ENCODE measurements at regions of chr10 and their contacts with region 1.

Region 1: GRCh38 chr10:71888623-71889387 is 37.8 kb upstream of the PSAP start:
- DNase-seq: peak; percentile 99 to 100 (median 100)
- H3K4me3 ChIP-seq: peak overlapping the region; percentile 8 to 64 (median 11)
- H3K4me3 Mint-ChIP-seq: peak overlapping the region; percentile 73 to 80
- H3K27ac ChIP-seq: peak overlapping the region; percentile 93 to 100
- H3K27ac Mint-ChIP-seq: peak overlapping the region; percentile 99 to 100 (median 100)
- H3K4me1 ChIP-seq: peaks cover 76 to 85% of the 10 kb centered on the region in 2 donors
- H3K4me1 Mint-ChIP-seq: peaks cover 67% of the 10 kb centered on the region
- H3K27me3 ChIP-seq: no peaks in the 10 kb centered on the region
- H3K27me3 Mint-ChIP-seq: peaks cover 0 to 6% (median 0%) of the 10 kb centered on the region in 3 donors
- CTCF ChIP-seq: peak; percentile 7

Region 2: GRCh38 chr10:71753091-71753959 is 135.5 kb before region 1 on chr10:
- intact Hi-C with region 1: loop called in 1 of 2 experiments (anchors 5 kb)
- DNase-seq: peak; percentile 95 to 98 (median 97)
- H3K4me3 ChIP-seq: peak overlapping the region in 1 of 3 experiments; percentile 64
- H3K4me3 Mint-ChIP-seq: peak overlapping the region; percentile 56 to 81
- H3K27ac ChIP-seq: peak overlapping the region; percentile 82 to 83
- H3K27ac Mint-ChIP-seq: peak overlapping the region; percentile 91 to 96 (median 95)
- H3K4me1 ChIP-seq: peaks cover 100% of the 10 kb centered on the region in 2 donors
- H3K4me1 Mint-ChIP-seq: peaks cover 97% of the 10 kb centered on the region
- H3K27me3 ChIP-seq: no peaks in the 10 kb centered on the region
- H3K27me3 Mint-ChIP-seq: peaks cover 0 to 2% (median 0%) of the 10 kb centered on the region in 3 donors
- CTCF ChIP-seq: no peak

Region 3: GRCh38 chr10:71850637-71851464 is 38.0 kb before region 1 on chr10 and contains the start of gene PSAP:
- intact Hi-C with region 1: loop called in 1 of 2 experiments (anchors 2 kb)
- DNase-seq: peak; percentile 98
- H3K4me3 ChIP-seq: peak within 1 kb of the TSS; percentile 88 to 99 (median 93)
- H3K4me3 Mint-ChIP-seq: peak within 1 kb of the TSS; percentile 99
- H3K27ac ChIP-seq: peak within 1 kb of the TSS; percentile 87 to 97
- H3K27ac Mint-ChIP-seq: peak within 1 kb of the TSS; percentile 96 to 100 (median 97)
- H3K4me1 ChIP-seq: peaks cover 59 to 64% of the 10 kb centered on the region in 2 donors
- H3K4me1 Mint-ChIP-seq: peaks cover 54% of the 10 kb centered on the region
- H3K27me3 ChIP-seq: no peaks in the 10 kb centered on the region
- H3K27me3 Mint-ChIP-seq: no peaks in the 10 kb centered on the region
- CTCF ChIP-seq: no peak
- polyA plus RNA-seq, gene PSAP: 3,391 to 8,673 (median 7,346) TPM

Region 4: DNA sequence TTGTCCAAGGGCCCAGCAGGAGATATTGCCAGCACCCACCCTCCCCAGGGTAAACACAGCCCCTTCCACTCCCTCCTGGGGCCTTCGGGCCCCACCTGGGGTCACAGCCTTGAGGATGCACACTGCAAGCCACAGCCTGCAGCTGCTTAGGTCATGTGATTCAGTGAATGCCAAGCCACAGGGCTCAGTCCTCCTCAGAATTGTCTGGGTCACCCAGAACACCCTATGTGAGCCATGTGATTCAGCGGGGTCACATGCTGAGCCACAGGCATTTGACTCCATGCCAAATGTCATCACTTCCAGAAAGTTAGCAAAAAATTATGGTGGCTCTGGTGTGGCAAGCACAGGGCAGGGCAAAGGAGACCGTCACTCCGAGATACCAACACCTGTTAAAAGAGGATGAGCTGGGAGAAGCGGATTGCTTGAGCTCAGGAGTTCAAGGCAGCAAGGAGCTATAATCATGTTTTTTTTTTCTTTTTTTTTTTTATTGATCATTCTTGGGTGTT is 20.6 kb before region 1 on chr10:
- intact Hi-C with region 1: loop called in 1 of 2 experiments (anchors 2 kb)
- DNase-seq: peak; percentile 96 to 99 (median 97)
- H3K4me3 ChIP-seq: no peak overlapping the region
- H3K4me3 Mint-ChIP-seq: peak overlapping the region; percentile 28 to 66
- H3K27ac ChIP-seq: peak overlapping the region; percentile 59 to 87
- H3K27ac Mint-ChIP-seq: peak overlapping the region; percentile 94 to 99 (median 97)
- H3K4me1 ChIP-seq: peaks cover 42 to 50% of the 10 kb centered on the region in 2 donors
- H3K4me1 Mint-ChIP-seq: peaks cover 43% of the 10 kb centered on the region
- H3K27me3 ChIP-seq: no peaks in the 10 kb centered on the region
- H3K27me3 Mint-ChIP-seq: no peaks in the 10 kb centered on the region
- CTCF ChIP-seq: no peak

Measured in CD14-positive monocyte (primary cell).